PC-3 (cell line): ENCODE measurements at regions of chr9 and their contacts with region 1.

Region 1: GRCh38 chr9:115495052-115495635 is 377.2 kb upstream of the TNC start:
- DNase-seq: peak; percentile 80
- ATAC-seq: peak; percentile 42
- H3K4me3 ChIP-seq: 0 out of 2 replicates have a peak overlapping the region, but pooled peaks have one; percentile 2
- H3K27ac ChIP-seq: peak overlapping the region; percentile 77
- H3K4me1 ChIP-seq: peaks cover 43% of the 10 kb centered on the region
- H3K27me3 ChIP-seq: no peaks in the 10 kb centered on the region
- CTCF ChIP-seq: no peak

Region 2: DNA sequence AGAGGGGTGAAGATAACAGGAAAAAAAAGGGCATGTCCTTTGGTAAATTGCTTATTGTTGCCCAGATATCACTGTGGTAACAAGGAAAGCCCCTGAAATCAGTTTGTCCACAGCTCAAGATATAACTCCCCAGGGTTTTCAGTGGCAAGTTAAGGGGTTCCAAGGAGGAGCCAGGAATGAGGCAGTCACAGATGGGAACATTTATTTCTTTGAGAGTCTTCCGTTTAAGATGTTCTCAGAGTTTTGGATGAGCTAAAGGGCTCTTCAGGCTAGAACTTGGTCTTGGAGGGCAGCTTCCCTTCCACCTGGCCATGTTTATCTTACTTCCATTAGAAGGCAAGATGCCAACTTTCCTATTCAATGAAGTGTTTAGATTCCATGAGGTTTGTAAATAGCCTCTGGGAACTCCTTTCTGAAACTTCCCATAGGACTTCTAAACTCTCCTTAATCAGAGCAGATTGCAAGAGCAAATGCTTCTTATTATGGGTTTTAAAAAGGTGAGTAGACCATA is 99.6 kb before region 1 on chr9:
- CTCF ChIA-PET with region 1: no interaction called
- POLR2A ChIA-PET with region 1: no interaction called
- intact Hi-C with region 1: loop called (anchors 5 kb)
- DNase-seq: peak; percentile 73
- ATAC-seq: peak; percentile 46
- H3K4me3 ChIP-seq: no peak overlapping the region
- H3K27ac ChIP-seq: peak overlapping the region; percentile 95
- H3K4me1 ChIP-seq: peaks cover 39% of the 10 kb centered on the region
- H3K27me3 ChIP-seq: no peaks in the 10 kb centered on the region
- CTCF ChIP-seq: no peak

Region 3: GRCh38 chr9:115653171-115653606 is 158.0 kb after region 1 on chr9:
- CTCF ChIA-PET with region 1: no interaction called
- POLR2A ChIA-PET with region 1: no interaction called
- intact Hi-C with region 1: no loop called
- DNase-seq: no peak
- ATAC-seq: no peak
- H3K4me3 ChIP-seq: no peak overlapping the region
- H3K27ac ChIP-seq: no peak overlapping the region
- H3K4me1 ChIP-seq: no peaks in the 10 kb centered on the region
- H3K27me3 ChIP-seq: no peaks in the 10 kb centered on the region
- CTCF ChIP-seq: no peak

Region 4: DNA sequence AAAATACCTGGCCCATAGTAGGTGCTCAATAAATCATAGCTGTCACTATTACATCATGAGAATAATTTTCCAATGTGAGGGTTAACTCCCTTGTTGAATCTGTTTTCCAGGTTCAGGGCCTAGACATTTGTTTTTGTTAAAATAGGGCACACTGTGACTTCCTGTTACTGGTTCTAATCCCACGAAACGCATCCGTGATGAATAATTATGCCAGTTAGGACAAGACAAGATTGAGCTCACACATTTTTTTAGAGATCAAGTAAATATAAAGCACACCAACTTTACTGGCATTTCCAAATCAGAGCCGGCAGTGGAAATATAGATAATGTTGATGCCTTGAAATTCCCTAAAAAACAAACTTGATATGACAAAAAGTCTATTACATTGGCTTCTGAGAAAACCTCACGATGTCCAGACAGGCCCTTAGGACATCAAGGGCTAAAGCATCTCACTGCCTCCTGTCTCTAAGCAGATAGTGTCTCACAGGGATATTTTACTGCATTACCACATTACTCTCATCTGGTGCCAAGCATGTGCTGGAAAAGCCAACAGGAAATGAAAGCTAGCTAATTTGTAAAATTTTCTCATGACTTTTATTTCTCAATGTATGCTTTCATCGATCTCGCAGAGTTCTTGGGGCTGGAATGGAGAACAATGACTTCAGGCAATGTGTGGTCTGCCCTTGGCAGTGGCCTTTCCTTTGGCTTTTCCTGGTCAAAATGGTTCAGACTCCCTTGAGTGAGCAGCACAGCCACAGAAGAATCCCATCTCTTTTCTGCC is 244.1 kb after region 1 on chr9:
- CTCF ChIA-PET with region 1: no interaction called
- POLR2A ChIA-PET with region 1: no interaction called
- intact Hi-C with region 1: no loop called
- DNase-seq: no peak
- ATAC-seq: no peak
- H3K4me3 ChIP-seq: no peak overlapping the region
- H3K27ac ChIP-seq: no peak overlapping the region
- H3K4me1 ChIP-seq: no peaks in the 10 kb centered on the region
- H3K27me3 ChIP-seq: no peaks in the 10 kb centered on the region
- CTCF ChIP-seq: no peak